Aorta (tissue), 5 donors: ENCODE measurements at regions of chrX and their contacts with region 1.

Region 1: DNA sequence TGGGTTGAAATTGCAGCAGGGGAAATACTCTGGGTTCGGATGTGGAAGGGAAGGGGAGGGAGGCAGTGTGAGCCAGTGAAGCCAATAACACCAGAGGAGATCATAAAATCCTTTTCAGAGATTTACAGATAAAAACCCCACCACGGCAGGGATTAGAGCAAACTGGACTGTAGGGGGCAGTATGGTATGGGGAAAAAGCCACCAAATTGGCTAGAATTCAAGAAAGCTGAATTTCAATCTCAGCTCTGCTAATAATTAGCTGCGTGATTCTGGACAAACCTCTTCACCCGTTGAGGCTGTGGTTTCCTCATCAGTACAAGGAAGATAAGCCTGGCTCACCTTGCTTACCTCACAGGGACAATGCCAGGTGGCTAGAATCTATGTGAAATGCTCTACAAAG is 108.1 kb downstream of the ATG4A start:
- DNase-seq: no peak
- ATAC-seq: peak; percentile 68
- H3K4me3 ChIP-seq: no peak overlapping the region
- H3K27ac ChIP-seq: no peak overlapping the region
- H3K4me1 ChIP-seq: no peaks in the 10 kb centered on the region
- H3K27me3 ChIP-seq: peaks cover 0 to 4% of the 10 kb centered on the region in 2 donors

Region 2: DNA sequence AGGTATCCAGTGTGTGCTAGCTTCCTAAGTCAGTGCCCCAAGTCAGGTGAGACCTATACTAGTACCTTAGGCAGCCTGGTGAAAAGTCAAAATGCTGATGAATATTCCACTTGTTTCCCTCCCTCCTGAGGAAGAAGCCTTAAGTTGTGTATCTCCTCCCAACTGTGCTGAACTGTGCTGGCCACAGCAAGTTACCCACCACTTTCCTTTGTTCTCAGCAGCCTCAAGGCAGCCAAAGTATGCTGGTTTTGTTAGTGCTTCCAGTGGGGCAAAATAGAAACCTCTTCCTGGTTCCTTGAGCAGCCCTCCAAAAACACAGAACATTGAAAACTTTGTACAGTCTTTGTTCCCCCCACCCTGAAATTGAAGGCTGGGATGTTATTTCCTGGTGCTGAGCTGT is 94.2 kb before region 1 on chrX:
- intact Hi-C with region 1: no loop called
- DNase-seq: no peak
- ATAC-seq: no peak
- H3K4me3 ChIP-seq: no peak overlapping the region
- H3K27ac ChIP-seq: no peak overlapping the region
- H3K4me1 ChIP-seq: no peaks in the 10 kb centered on the region
- H3K27me3 ChIP-seq: no peaks in the 10 kb centered on the region

Region 3: DNA sequence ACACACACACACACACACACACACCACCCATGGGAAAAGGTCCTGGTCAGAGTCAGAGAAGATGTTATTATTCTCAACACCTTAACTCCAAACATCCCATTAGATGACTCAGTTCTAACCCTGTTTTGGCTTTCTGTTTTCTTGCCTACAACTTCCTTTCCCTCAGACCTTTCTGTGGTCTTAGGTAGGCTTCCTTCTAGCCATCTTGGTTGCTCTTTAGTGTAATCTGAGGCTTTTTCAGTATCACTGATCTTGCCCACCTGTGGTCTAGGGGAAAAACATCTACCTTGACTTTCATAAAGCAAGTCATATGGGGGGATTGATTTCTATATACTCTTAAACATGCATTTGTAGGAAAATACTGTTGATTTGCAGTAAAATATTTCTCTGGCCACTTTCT is 51.2 kb before region 1 on chrX:
- intact Hi-C with region 1: loop called in 1 of 2 experiments (anchors 10 kb)
- DNase-seq: no peak
- ATAC-seq: no peak
- H3K4me3 ChIP-seq: no peak overlapping the region
- H3K27ac ChIP-seq: no peak overlapping the region
- H3K4me1 ChIP-seq: no peaks in the 10 kb centered on the region
- H3K27me3 ChIP-seq: no peaks in the 10 kb centered on the region

Region 4: GRCh38 chrX:109475174-109475891 is 1275.6 kb after region 1 on chrX:
- intact Hi-C with region 1: loop called in 1 of 2 experiments (anchors 10 kb)
- DNase-seq: peak in 1 of 2 donors; percentile 38
- ATAC-seq: no peak
- H3K4me3 ChIP-seq: no peak overlapping the region
- H3K27ac ChIP-seq: no peak overlapping the region
- H3K4me1 ChIP-seq: no peaks in the 10 kb centered on the region
- H3K27me3 ChIP-seq: no peaks in the 10 kb centered on the region